IMR-90 (cell line): ENCODE measurements at regions of chr20 and their contacts with region 1.

Region 1: GRCh38 chr20:51306503-51307358 is 235.8 kb downstream of the NFATC2 start:
- DNase-seq: peak; percentile 70
- ATAC-seq: peak; percentile 97
- H3K4me3 ChIP-seq: no peak overlapping the region
- H3K27ac ChIP-seq: no peak overlapping the region
- H3K4me1 ChIP-seq: peaks cover 5% of the 10 kb centered on the region; the same call in 1 of the 2 replicates
- H3K27me3 ChIP-seq: no peaks in the 10 kb centered on the region
- CTCF ChIP-seq: peak; percentile 94
- POLR2A ChIP-seq: no peak; the same call in 1 of the 2 replicates
- RAD21 ChIP-seq: peak; percentile 98

Region 2: DNA sequence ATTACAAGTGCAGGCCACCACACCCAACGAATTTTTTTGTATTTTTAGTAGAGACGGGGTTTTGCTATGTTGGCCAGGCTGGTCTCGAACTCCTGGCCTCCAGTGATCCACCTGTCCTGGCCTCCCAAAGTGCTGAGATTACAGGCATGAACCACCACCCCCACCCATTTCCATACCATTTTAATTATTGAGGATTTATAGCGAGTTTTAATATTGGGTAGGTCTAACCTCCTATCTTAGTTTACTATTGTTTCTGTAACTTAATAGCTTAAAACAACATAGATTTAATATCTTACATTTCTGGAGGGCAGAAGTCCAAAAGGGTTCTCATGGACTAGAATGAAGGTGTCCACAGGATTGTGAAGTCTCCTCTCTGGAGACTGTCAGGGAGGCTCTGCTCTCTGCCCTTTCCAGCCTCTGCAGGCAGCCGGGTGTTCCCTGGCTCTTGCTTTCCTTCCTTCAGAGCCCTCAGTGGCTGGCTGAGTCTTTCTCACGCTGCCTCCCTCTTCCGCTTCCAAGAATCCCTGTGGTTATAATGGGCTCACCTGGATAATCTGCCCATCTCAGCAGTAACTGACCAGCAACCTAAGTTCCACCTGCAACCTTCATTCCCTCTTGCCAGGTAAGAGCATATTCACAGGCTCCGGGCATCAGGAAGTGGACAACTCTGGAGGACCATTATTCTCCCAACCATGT is 530.5 kb before region 1 on chr20:
- CTCF ChIA-PET with region 1: no interaction called
- POLR2A ChIA-PET with region 1: no interaction called
- dilution Hi-C with region 1: no loop called
- in situ Hi-C with region 1: no loop called
- intact Hi-C with region 1: no loop called
- DNase-seq: no peak
- ATAC-seq: no peak
- H3K4me3 ChIP-seq: no peak overlapping the region
- H3K27ac ChIP-seq: no peak overlapping the region
- H3K4me1 ChIP-seq: no peaks in the 10 kb centered on the region
- H3K27me3 ChIP-seq: peaks cover 12% of the 10 kb centered on the region
- CTCF ChIP-seq: no peak
- POLR2A ChIP-seq: no peak
- RAD21 ChIP-seq: no peak

Region 3: GRCh38 chr20:50992733-50993457 is 313.8 kb before region 1 on chr20:
- CTCF ChIA-PET with region 1: interaction called, 50 read pairs
- POLR2A ChIA-PET with region 1: no interaction called
- dilution Hi-C with region 1: no loop called
- in situ Hi-C with region 1: loop called (anchors 5 kb)
- intact Hi-C with region 1: loop called (anchors 1 kb)
- DNase-seq: peak; percentile 69
- ATAC-seq: peak; percentile 60
- H3K4me3 ChIP-seq: no peak overlapping the region
- H3K27ac ChIP-seq: no peak overlapping the region
- H3K4me1 ChIP-seq: peaks cover 6% of the 10 kb centered on the region
- H3K27me3 ChIP-seq: no peaks in the 10 kb centered on the region
- CTCF ChIP-seq: peak; percentile 80
- POLR2A ChIP-seq: no peak
- RAD21 ChIP-seq: peak; percentile 80

Region 4: DNA sequence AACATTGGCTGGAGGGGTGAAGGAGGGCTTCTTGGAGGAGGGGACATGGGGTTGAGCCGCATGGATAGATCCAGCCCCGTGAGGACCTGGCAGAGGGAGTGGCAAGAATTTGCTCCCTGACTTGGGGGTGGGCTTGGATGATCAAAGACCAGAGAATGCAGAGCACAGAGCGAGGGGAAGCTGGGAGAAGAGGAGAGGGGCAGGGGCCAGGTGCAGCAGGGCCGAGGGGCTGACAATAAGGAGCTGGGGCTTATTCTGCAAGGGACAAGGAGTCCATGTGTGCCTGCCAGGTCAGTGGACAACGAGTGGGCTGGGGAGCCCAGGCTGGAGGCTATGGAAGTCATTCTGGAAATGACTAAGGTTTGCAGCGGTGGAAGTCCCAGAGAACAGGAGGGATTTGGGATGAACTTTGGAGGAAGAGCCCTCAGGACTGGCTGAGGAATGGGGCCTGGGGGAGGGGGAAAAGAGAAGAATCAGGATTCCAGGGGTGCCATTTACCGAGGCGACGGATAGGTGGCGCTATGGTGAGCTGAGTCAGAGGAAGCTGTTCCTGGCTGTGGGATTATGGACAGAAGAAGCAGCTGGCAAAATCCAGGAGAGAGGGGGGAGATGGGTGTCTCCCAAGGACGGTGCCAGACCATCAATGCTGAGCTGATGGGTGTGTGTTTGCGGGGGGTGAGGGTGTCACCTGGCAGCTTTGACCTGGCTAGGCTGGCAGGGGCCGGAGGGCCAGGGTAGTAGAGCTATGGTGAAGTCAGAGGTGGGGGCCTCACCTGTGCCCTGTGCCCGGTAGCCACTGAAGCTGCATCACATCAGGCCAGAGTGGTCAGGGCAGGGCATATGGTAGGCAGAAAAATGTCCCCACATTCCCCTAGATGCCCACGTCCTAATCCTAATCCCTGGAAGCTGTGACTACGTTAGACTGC is 291.7 kb before region 1 on chr20:
- CTCF ChIA-PET with region 1: interaction called, 10 read pairs
- POLR2A ChIA-PET with region 1: interaction called, 11 read pairs
- dilution Hi-C with region 1: no loop called
- in situ Hi-C with region 1: no loop called
- intact Hi-C with region 1: loop called (anchors 1 kb)
- DNase-seq: peak; percentile 73
- ATAC-seq: peak; percentile 98
- H3K4me3 ChIP-seq: no peak overlapping the region
- H3K27ac ChIP-seq: no peak overlapping the region
- H3K4me1 ChIP-seq: peaks cover 3% of the 10 kb centered on the region
- H3K27me3 ChIP-seq: no peaks in the 10 kb centered on the region
- CTCF ChIP-seq: peak; percentile 91
- POLR2A ChIP-seq: no peak
- RAD21 ChIP-seq: peak; percentile 83

Region 5: DNA sequence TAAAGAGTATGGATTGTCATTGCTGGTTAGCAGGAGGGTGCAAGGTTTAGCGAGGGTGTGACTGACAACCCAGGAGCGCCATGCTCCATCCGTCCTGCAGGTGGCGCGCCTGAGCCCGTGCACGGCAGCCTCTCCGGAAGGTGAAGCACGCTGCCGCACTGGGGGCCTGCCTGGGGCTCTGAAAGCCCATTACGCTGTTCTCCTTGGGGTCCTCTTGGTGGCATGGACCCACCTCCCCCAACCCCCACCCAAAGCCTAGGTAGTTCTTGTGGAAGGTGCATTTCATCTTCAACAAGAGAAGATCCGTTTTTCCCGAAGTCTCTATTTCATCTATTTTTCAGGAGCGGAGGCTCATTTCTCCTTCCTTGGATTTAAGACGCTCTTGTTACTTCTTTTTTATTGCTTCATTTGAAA is 86.4 kb before region 1 on chr20:
- CTCF ChIA-PET with region 1: no interaction called
- POLR2A ChIA-PET with region 1: no interaction called
- dilution Hi-C with region 1: no loop called
- in situ Hi-C with region 1: no loop called
- intact Hi-C with region 1: loop called (anchors 2 kb)
- DNase-seq: no peak
- ATAC-seq: peak; percentile 65
- H3K4me3 ChIP-seq: no peak overlapping the region
- H3K27ac ChIP-seq: no peak overlapping the region
- H3K4me1 ChIP-seq: no peaks in the 10 kb centered on the region
- H3K27me3 ChIP-seq: peaks cover 22% of the 10 kb centered on the region
- CTCF ChIP-seq: peak; percentile 68
- POLR2A ChIP-seq: no peak
- RAD21 ChIP-seq: peak; percentile 58